G401 (cell line): ENCODE measurements at regions of chr14 and their contacts with region 1.

Region 1: DNA sequence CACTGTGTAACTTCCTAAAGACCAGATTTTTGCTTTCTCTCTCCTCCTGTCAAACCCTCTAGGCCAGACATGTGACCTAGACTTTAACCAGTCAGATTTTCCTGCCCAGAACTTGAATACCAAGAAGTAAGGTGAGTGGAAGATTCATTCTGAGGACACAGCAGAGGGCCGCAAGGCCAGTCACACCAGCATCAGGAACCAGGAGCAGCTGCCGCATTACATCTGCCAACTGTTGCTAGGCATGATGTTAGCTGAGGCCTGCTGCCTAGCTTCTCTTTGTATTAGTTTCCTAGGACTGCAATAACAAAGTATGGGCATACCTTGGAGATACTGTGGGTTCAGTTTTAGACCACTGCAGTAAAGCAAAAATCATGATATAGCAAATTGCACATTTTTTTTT is 101.9 kb upstream of the BMP4 start:
- DNase-seq: no peak

Region 2: GRCh38 chr14:53786045-53786444 is 272.5 kb before region 1 on chr14:
- in situ Hi-C with region 1: loop called (anchors 10 kb)
- DNase-seq: no peak

Region 3: GRCh38 chr14:54211551-54212308 is 153.2 kb after region 1 on chr14:
- in situ Hi-C with region 1: no loop called
- DNase-seq: no peak

Region 4: GRCh38 chr14:54241517-54241916 is 183.0 kb after region 1 on chr14:
- in situ Hi-C with region 1: no loop called
- DNase-seq: no peak